IMR-90 (cell line): ENCODE measurements at regions of chr11 and their contacts with region 1.

Region 1: DNA sequence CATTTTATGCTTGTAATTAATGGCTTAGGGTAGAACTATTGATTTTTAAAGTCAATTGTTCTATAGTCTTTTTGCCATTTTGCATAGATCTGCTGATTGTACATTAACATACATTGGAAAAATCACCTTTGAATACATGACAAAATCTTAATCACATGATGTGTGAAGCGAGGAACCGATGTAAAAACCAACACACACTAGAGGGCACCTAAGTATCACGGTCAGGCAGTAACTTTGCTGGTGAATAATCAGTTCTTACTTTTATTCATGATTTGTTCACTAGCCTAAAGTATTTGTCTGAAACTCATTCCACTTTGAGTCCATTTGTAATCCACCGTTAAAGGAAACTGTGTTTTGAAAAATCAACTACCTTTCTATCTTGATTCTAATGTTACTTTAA is 28.2 kb downstream of the JHY start:
- DNase-seq: peak; percentile 38
- ATAC-seq: no peak
- H3K4me3 ChIP-seq: no peak overlapping the region
- H3K27ac ChIP-seq: no peak overlapping the region
- H3K4me1 ChIP-seq: no peaks in the 10 kb centered on the region
- H3K27me3 ChIP-seq: peaks cover 12% of the 10 kb centered on the region
- CTCF ChIP-seq: peak; percentile 48
- POLR2A ChIP-seq: no peak
- RAD21 ChIP-seq: peak; percentile 62

Region 2: DNA sequence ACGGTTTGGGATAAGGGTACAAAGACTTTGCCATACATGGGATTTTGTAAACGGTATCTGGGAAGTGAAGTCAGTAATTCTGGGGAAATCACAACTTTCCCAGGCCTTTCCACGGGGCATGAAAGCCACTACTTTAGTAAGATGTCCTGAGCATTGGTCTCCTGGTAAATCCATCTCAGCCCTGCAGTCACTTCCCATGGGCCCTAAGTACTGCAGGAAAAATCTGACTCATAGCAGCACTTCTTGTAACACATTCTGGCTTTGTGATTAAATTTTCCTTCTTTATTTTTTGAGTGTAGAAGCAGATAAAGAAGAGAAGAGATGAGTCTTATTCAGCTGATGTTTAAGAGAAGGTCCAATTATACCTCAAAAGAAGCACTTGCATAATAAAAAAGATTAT is 862.4 kb before region 1 on chr11:
- CTCF ChIA-PET with region 1: no interaction called
- POLR2A ChIA-PET with region 1: no interaction called
- dilution Hi-C with region 1: no loop called
- in situ Hi-C with region 1: no loop called
- intact Hi-C with region 1: no loop called
- DNase-seq: peak; percentile 64
- ATAC-seq: no peak
- H3K4me3 ChIP-seq: no peak overlapping the region
- H3K27ac ChIP-seq: peak overlapping the region; percentile 4; the same call in 1 of the 2 replicates
- H3K4me1 ChIP-seq: peaks cover 20% of the 10 kb centered on the region
- H3K27me3 ChIP-seq: no peaks in the 10 kb centered on the region
- CTCF ChIP-seq: no peak
- POLR2A ChIP-seq: no peak
- RAD21 ChIP-seq: no peak

Region 3: GRCh38 chr11:122235615-122236014 is 675.2 kb before region 1 on chr11:
- CTCF ChIA-PET with region 1: no interaction called
- POLR2A ChIA-PET with region 1: no interaction called
- dilution Hi-C with region 1: no loop called
- in situ Hi-C with region 1: no loop called
- intact Hi-C with region 1: no loop called
- DNase-seq: peak; percentile 96
- ATAC-seq: peak; percentile 81
- H3K4me3 ChIP-seq: no peak overlapping the region
- H3K27ac ChIP-seq: peak overlapping the region; percentile 88; the same call in 1 of the 2 replicates
- H3K4me1 ChIP-seq: peaks cover 9% of the 10 kb centered on the region
- H3K27me3 ChIP-seq: no peaks in the 10 kb centered on the region
- CTCF ChIP-seq: no peak
- POLR2A ChIP-seq: no peak
- RAD21 ChIP-seq: no peak

Region 4: DNA sequence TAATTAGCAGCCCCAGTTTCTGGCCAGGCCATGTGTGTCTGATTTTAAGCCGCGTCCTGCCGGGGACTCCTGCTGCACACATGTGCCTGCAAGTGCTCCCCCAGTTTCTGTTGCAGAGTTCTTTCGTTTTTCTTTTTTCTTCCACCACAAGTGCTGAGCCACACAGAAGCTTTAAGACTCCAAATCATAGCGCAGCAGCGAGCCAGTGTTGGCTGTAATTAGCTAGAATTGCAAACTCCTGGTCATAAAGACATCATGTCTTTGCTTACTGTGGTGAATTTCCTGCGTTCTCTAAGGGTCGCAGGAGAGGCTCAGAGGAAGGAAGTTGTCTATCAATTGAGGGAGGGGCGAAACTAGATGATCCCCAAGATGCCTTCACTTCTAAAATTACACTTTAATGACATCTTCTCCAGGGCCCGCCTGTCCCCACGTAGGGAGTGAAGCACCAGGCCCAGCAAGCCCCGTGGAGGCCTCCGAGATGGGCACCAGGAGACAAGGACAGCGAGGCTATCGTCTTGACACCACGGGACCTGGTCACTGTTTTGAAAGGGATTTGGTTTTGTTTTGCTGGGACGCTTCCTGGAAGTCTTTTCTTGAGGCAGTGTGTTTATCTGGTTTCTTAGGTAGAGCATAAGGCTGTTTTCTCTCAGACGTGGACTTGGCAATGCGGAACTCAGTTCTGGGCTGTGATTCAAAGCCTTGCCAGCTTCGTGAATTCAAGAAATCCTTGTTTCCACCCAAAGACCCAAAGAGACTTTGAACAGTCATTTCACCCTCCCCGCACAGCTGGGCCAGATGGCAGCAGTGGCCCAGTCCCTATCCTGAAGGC is 183.5 kb before region 1 on chr11:
- CTCF ChIA-PET with region 1: no interaction called
- POLR2A ChIA-PET with region 1: no interaction called
- dilution Hi-C with region 1: no loop called
- in situ Hi-C with region 1: no loop called
- intact Hi-C with region 1: no loop called
- DNase-seq: no peak
- ATAC-seq: no peak
- H3K4me3 ChIP-seq: no peak overlapping the region
- H3K27ac ChIP-seq: no peak overlapping the region
- H3K4me1 ChIP-seq: peaks cover 28% of the 10 kb centered on the region
- H3K27me3 ChIP-seq: no peaks in the 10 kb centered on the region
- CTCF ChIP-seq: no peak
- POLR2A ChIP-seq: no peak
- RAD21 ChIP-seq: no peak

Region 5: DNA sequence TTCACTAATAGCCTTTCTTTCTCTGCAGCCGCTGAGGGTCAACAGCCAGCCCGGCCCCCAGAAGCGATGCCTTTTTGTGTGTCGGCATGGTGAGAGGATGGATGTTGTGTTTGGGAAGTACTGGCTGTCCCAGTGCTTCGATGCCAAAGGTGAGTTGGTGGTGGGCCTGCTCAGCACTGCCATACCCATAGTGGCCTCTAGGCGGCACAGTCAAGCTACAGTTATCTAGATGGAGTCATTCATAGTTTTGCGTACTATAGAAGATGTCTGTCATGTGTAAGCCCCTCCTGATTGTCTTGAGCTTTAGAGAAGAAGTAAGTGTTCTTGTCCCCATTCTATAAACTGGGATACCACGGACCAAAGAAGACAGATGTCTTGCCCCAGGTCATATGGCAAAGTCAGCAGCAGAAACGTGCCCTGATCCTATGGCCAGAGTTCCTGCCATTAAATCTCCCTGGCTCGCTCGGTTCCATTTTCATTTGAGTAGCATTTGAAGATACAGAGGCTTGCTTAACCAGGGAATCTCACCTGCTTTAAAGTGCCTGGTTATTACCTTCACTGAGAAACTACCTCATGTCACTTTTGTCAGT is 114.6 kb before region 1 on chr11:
- CTCF ChIA-PET with region 1: no interaction called
- POLR2A ChIA-PET with region 1: no interaction called
- dilution Hi-C with region 1: no loop called
- in situ Hi-C with region 1: no loop called
- intact Hi-C with region 1: no loop called
- DNase-seq: peak; percentile 36
- ATAC-seq: no peak
- H3K4me3 ChIP-seq: no peak overlapping the region
- H3K27ac ChIP-seq: no peak overlapping the region
- H3K4me1 ChIP-seq: peaks cover 7% of the 10 kb centered on the region
- H3K27me3 ChIP-seq: no peaks in the 10 kb centered on the region
- CTCF ChIP-seq: peak; percentile 60
- POLR2A ChIP-seq: no peak
- RAD21 ChIP-seq: peak; percentile 52

Region 6: DNA sequence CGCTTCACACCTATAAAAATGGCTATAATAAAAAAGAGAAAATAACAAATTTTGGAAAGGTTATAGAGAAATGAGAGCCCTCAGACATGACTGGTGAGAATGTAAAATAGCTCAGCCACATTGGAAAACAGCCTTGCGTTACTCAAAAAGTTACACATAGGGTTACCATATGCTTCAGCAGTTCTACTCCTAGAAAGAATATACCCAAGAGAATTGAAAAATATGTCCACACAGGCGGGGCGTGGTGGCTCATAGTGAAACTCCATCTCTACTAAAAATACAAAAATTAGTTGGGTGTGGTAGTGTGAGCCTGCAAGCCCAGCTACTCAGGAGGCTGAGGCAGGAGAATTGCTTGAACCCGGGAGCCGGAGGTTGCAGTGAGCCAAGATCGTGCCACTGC is 35.8 kb before region 1 on chr11:
- CTCF ChIA-PET with region 1: no interaction called
- POLR2A ChIA-PET with region 1: no interaction called
- dilution Hi-C with region 1: no loop called
- in situ Hi-C with region 1: no loop called
- intact Hi-C with region 1: loop called (anchors 1 kb)
- DNase-seq: no peak
- ATAC-seq: no peak
- H3K4me3 ChIP-seq: no peak overlapping the region
- H3K27ac ChIP-seq: no peak overlapping the region
- H3K4me1 ChIP-seq: no peaks in the 10 kb centered on the region
- H3K27me3 ChIP-seq: peaks cover 22% of the 10 kb centered on the region
- CTCF ChIP-seq: no peak
- POLR2A ChIP-seq: no peak
- RAD21 ChIP-seq: no peak